T-cell (primary cell): ENCODE measurements at regions of chr1 and their contacts with region 1.

Region 1: DNA sequence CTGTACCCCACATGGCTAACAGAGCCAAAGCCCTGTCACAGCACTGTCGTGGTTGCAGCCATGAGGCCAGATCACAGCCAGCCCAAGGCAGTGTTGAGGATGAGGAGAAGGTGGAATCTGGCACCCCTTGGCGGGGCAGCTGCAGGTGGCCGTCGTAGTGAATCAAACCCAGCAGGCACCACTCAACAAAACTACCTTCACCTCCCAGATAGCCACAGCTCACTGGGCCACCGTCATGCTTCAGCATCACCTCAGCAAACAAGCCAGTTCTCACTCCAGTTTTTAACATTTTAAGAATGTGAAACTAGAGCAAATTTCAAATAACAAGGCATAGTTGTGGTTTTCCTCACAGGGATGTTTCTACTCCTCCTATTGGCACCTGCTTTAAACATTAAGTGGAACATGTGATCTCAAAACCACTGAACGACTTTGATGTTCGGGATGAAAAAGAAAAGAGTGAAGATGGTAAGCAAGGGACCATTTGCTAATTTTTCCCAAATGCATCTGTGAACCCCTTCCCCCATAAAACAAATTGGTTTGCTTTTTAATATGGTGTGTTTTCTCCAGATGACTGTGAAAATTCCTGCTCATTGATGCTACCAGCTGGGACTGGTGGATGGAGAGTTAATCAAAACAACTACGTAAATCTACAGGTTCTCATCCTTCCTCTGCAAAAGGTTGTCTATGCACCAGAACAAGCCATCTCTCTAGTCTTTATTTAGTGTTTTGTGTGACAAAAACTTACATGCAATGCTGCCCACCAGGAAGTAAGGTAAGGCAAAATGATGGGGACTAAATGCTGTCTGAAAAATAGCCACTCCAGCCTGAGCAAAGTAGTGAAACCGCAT is 45.5 kb downstream of the TOR1AIP2 start:
- DNase-seq: peak in 6 of 35 experiments; percentile 14 to 57 (median 24)
- ATAC-seq: peak; percentile 65 to 90 (median 80)
- H3K4me3 ChIP-seq: peak overlapping the region in 1 of 2 donors; percentile 15
- H3K4me3 Mint-ChIP-seq: peak overlapping the region; percentile 50 to 72 (median 56)
- H3K27ac ChIP-seq: peak overlapping the region; percentile 52
- H3K27ac Mint-ChIP-seq: peak overlapping the region; percentile 85 to 89
- H3K4me1 ChIP-seq: peaks cover 11 to 16% of the 10 kb centered on the region in 2 experiments
- H3K4me1 Mint-ChIP-seq: peaks cover 25 to 35% (median 26%) of the 10 kb centered on the region in 3 donors
- H3K27me3 ChIP-seq: peaks cover 0 to 6% of the 10 kb centered on the region in 2 experiments
- H3K27me3 Mint-ChIP-seq: no peaks in the 10 kb centered on the region

Region 2: DNA sequence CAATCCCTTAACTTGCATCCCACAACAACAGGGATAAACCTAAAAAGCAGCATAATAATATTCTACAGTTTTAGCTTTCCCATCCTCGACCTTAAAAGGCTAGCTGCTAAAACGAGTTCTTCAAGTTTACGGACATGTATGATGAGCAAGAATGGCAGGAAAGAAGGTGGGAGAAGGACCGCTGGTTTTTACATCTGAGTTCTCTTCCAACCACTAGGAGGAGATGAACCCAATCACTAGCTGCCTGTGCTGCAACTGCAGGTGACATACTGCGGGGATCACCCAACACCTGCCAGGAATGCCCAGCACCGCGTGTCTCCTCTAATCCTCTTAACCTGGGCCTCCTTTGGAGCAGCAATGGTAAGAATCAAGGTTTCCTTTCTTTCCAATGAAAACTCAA is 726.7 kb before region 1 on chr1:
- CTCF ChIA-PET with region 1: no interaction called
- POLR2A ChIA-PET with region 1: interaction called in 1 of 2 experiments, 10 read pairs
- DNase-seq: peak in 1 of 35 experiments; percentile 29
- ATAC-seq: peak in 2 of 4 experiments; percentile 47 to 49
- H3K4me3 ChIP-seq: no peak overlapping the region
- H3K4me3 Mint-ChIP-seq: no peak overlapping the region
- H3K27ac ChIP-seq: no peak overlapping the region
- H3K27ac Mint-ChIP-seq: no peak overlapping the region
- H3K4me1 ChIP-seq: no peaks in the 10 kb centered on the region
- H3K4me1 Mint-ChIP-seq: no peaks in the 10 kb centered on the region
- H3K27me3 ChIP-seq: no peaks in the 10 kb centered on the region
- H3K27me3 Mint-ChIP-seq: no peaks in the 10 kb centered on the region